CD8-positive, alpha-beta T cell (primary cell): ENCODE measurements at regions of chr9 and their contacts with region 1.

Region 1: DNA sequence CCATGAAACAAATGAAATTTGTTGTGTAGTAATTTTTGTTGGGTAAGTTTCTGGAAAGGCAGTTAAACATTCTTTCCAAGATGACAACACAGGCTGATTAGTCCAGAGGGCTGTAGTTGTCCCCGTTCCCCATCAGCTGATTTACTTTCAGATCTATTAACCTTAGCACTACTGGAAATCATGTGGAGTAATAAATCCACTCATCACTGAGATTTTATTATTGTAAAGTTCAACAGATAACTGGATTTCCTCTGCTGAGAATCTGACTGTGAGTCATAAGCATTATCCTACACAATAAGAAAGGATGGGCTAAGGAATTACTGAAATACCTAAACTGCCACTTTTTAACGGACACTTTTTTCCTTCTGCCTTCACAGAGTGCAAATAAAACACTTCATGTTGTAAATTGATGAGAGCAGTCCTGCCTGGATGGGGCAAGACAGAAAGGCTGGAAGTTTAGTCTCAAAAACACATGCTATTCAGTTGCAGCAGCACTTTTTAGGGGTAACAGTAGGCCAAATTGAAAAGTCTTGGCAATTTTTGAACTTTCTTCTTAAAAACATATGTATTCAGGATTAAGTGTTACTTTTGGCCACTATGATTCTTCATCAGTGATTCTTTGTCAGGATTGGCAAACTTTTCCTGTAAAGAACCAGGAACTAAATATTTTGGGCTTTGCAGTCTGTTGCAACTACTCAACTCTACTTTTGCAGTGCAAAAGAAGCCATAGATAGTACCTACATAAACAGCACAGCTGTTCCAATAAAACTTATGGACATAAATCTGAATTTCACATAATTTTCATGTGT is 7.0 kb downstream of the STOM start:
- DNase-seq: no peak
- ATAC-seq: no peak
- H3K4me3 ChIP-seq: no peak overlapping the region
- H3K4me3 Mint-ChIP-seq: no peak overlapping the region
- H3K27ac ChIP-seq: peak overlapping the region in 1 of 2 experiments; percentile 33
- H3K27ac Mint-ChIP-seq: no peak overlapping the region
- H3K4me1 ChIP-seq: peaks cover 27% of the 10 kb centered on the region
- H3K4me1 Mint-ChIP-seq: peaks cover 78% of the 10 kb centered on the region
- H3K27me3 ChIP-seq: no peaks in the 10 kb centered on the region
- H3K27me3 Mint-ChIP-seq: no peaks in the 10 kb centered on the region
- CTCF ChIP-seq: no peak

Region 2: DNA sequence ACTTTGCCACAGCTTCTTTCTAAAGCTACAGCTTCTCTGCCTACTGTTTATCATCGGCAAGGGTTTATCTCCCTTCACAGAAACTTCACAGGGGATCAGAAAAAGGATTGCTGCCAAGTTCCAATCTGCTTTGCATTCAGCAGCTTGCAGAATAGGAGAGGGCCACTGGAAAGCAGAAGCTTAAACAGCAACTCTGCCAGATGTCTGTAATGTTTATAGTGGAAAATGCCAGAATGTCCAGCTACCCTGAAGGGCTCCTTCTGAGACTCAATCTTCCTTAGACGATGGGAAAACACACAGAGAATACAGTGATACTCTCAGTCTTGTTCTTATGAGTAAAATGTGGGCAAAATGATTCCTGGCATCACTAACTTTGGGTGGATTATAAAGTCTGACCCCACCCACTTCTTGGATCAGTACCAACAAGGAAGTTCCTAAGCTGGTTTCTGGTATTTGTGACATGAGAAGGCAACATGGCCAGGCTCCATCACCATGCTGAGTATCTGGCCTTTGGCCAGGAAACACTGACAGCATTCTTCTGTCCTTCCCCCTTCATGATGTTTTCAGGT is 11.9 kb before region 1 on chr9:
- CTCF ChIA-PET with region 1: interaction called, 6 read pairs
- POLR2A ChIA-PET with region 1: interaction called, 7 read pairs
- intact Hi-C with region 1: loop called in 1 of 2 experiments (anchors 1 kb)
- DNase-seq: no peak
- ATAC-seq: no peak
- H3K4me3 ChIP-seq: no peak overlapping the region
- H3K4me3 Mint-ChIP-seq: no peak overlapping the region
- H3K27ac ChIP-seq: no peak overlapping the region
- H3K27ac Mint-ChIP-seq: no peak overlapping the region
- H3K4me1 ChIP-seq: peaks cover 23% of the 10 kb centered on the region
- H3K4me1 Mint-ChIP-seq: peaks cover 37% of the 10 kb centered on the region
- H3K27me3 ChIP-seq: no peaks in the 10 kb centered on the region
- H3K27me3 Mint-ChIP-seq: no peaks in the 10 kb centered on the region
- CTCF ChIP-seq: no peak